Activated CD4-positive, alpha-beta memory T cell treated with anti-CD3 and anti-CD28 coated beads, Interleukin-2, amount 10 ng/mL, durations not matched to agents 7 days and 5 days (primary cell): ENCODE measurements at regions of chr19 and their contacts with region 1.

Region 1: GRCh38 chr19:13150187-13150930 is at the starts of genes IER2 and STX10:
- DNase-seq: peak; percentile 94
- H3K4me3 Mint-ChIP-seq: peak within 1 kb of the TSS; percentile 95
- H3K27ac Mint-ChIP-seq: peak within 1 kb of the TSS; percentile 99
- H3K4me1 Mint-ChIP-seq: peaks cover 24% of the 10 kb centered on the region
- H3K27me3 Mint-ChIP-seq: no peaks in the 10 kb centered on the region
- total RNA-seq, gene IER2: 231 to 234 TPM
- total RNA-seq, gene STX10: 69.0 to 72.2 TPM

Region 2: DNA sequence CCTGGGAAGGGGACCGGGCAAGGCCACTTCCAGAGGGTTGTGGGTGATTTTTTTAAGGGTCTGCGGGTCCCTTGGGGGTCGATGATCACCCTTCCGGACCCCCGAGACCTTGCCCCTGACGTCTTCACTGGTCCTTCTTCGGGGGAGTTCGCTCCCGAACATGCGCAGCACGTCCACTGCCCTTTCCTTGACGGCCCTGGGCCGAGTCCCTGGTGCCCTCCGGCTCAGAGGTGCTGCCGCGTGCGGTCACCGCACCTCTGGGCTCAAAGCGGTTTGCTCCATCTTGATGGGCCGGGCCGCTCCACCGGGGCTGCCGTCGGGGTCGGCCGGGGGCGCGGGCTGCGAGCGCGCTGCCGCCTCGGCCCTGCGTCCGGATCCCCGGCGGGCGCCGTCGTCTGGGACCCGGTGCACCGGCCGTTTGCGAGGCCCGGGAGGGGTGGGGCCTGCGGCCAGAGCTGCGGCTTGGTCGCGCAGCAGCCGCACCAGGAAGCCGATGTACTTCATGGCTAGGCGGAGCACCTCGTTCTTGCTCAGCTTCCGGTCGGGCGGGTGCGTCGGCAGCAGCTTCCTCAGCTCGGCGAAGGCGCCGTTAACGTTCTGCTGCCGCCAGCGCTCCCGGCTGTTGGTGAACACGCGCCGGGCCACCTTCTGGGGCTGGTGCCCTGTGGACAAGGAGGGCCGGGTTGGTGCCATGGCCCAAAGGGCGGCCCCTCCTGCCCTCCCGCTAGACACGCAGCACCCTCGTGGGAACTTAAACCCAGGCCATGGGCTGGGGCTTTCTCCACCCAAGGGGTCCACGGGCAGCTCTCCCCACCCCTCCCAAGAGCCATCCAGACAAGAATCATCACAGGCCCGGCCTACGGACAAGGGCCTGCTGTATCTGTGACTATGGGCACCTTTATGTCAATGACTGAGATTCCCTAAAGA is 51.0 kb before region 1 on chr19:
- CTCF ChIA-PET with region 1: interaction called, 12 read pairs
- POLR2A ChIA-PET with region 1: interaction called, 21 read pairs
- DNase-seq: peak; percentile 86
- H3K4me3 Mint-ChIP-seq: peak overlapping the region; percentile 66
- H3K27ac Mint-ChIP-seq: peak overlapping the region; percentile 91
- H3K4me1 Mint-ChIP-seq: peaks cover 63% of the 10 kb centered on the region
- H3K27me3 Mint-ChIP-seq: peaks cover 31% of the 10 kb centered on the region

Region 3: GRCh38 chr19:13117772-13118423 is 32.5 kb before region 1 on chr19 and contains the start of gene NACC1:
- CTCF ChIA-PET with region 1: interaction called, 8 read pairs
- POLR2A ChIA-PET with region 1: interaction called, 79 read pairs
- DNase-seq: peak; percentile 93
- H3K4me3 Mint-ChIP-seq: peak within 1 kb of the TSS; percentile 96
- H3K27ac Mint-ChIP-seq: peak within 1 kb of the TSS; percentile 94
- H3K4me1 Mint-ChIP-seq: peaks cover 52% of the 10 kb centered on the region
- H3K27me3 Mint-ChIP-seq: no peaks in the 10 kb centered on the region
- total RNA-seq, gene NACC1: 74.5 to 82.2 TPM

Region 4: DNA sequence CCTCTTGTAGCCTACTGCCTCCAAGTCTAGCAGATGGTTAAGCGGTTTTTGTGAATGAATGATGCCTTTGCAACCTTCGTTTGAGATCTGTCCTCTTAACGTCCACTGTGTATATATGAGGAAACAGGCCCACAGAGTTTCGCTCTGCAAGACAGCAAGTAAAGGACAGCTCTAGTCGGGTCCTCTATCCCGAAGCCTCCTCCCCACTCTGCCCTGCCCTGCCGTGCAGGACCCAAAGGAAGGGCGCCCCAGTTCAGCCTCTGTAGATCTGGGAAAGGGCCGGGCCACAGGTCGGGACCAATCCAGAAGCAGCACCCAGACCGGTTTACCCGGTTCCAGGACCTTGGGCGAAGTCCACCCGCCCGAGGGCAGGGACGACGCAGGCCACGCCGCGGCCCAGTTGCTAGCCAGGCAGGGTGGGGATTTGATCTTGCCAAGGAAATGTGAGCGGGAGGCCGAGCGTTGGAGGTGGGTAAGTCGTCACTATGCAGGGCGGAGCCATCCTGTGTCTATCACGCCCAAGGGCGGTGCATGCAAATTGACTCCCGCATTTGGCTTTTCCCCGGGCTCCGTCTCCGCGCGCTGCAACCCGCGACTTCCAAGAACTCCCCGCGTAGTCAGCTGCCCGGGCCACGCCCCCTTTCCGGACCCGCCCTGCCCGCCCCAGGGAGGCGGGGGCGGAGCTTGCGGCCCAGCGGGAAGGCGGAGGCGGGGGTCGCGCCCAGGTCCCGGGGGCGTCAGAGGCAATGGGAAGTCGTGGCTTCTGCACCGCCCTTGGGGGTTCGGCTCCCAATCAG is 12.4 kb after region 1 on chr19:
- CTCF ChIA-PET with region 1: interaction called, 29 read pairs
- POLR2A ChIA-PET with region 1: interaction called, 335 read pairs
- DNase-seq: peak; percentile 94
- H3K4me3 Mint-ChIP-seq: peak overlapping the region; percentile 89
- H3K27ac Mint-ChIP-seq: peak overlapping the region; percentile 99
- H3K4me1 Mint-ChIP-seq: peaks cover 77% of the 10 kb centered on the region
- H3K27me3 Mint-ChIP-seq: no peaks in the 10 kb centered on the region

Region 5: GRCh38 chr19:13181747-13182388 is 31.5 kb after region 1 on chr19:
- CTCF ChIA-PET with region 1: interaction called, 3 read pairs
- POLR2A ChIA-PET with region 1: interaction called, 32 read pairs
- DNase-seq: peak; percentile 20
- H3K4me3 Mint-ChIP-seq: no peak overlapping the region
- H3K27ac Mint-ChIP-seq: peak overlapping the region; percentile 34
- H3K4me1 Mint-ChIP-seq: peaks cover 21% of the 10 kb centered on the region
- H3K27me3 Mint-ChIP-seq: no peaks in the 10 kb centered on the region

Region 6: DNA sequence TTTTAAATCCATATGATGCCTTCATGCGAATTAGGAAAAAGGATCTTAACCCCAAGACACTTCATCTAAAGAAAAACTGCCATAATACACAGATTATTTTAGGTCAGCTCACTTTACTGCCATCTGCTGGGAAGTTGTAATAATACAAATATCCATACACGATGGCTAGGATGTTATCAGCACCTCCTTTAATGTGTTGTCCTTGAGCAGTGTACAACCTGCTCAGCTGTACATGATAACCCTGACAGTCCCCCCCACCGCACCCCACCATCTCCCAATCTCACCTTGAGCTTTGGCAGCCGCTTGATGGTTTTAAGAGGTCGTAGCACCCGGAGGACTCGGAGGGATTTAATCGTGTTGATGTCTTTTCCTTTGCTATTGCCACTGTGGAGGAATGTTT is 112.1 kb after region 1 on chr19:
- CTCF ChIA-PET with region 1: interaction called, 4 read pairs
- POLR2A ChIA-PET with region 1: interaction called, 12 read pairs
- DNase-seq: peak; percentile 21
- H3K4me3 Mint-ChIP-seq: no peak overlapping the region
- H3K27ac Mint-ChIP-seq: no peak overlapping the region
- H3K4me1 Mint-ChIP-seq: peaks cover 20% of the 10 kb centered on the region
- H3K27me3 Mint-ChIP-seq: peaks cover 26% of the 10 kb centered on the region